MCF 10A (cell line): ENCODE measurements at regions of chrX and their contacts with region 1.

Region 1: DNA sequence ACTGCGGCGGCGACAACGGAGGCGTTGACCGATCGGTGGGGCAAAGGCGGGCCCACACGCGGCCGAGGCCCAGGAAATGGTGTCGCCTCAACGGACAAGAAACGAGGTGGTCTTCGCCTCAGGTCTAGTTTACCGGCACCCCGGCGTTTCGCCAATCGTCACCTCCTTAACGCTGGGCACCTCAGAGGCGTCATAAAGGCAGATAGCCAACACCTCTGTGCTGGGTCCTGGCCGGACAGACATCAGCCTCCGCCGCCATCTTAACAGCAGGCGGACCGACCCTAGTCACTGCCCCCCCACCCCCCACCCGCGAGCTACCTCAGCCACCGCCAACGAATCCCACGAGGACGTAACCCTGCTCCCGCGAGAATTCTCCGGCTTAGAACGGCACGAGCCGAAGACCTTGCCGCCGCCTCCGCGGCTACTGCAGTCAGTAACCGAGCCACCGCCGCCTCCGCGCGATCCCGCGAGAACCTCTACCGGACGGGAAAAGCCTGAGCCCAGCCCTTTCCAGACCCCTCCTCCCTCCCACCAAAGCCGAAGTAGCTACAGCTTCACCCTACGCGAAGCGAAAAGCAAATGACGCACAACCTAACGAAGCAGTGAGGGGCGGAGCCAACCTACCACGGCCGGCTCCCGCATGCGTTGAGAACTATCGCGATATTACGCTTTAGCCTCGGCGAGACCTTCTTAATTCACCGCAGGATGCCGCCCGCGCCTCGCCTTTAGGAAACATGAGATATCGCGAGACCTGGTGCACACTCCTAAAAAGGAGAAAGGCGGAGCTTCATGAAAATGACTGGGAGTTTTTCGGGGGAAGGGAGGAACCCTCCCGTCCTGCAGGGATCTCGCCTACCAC is 2.7 kb downstream of the HUWE1 start:
- DNase-seq: peak; percentile 97
- H3K4me3 Mint-ChIP-seq: peak overlapping the region; percentile 71
- H3K27ac Mint-ChIP-seq: peak overlapping the region; percentile 73
- H3K4me1 Mint-ChIP-seq: peaks cover 6% of the 10 kb centered on the region
- H3K27me3 Mint-ChIP-seq: peaks cover 37% of the 10 kb centered on the region
- CTCF ChIP-seq: no peak

Region 2: GRCh38 chrX:53704294-53704693 is 20.5 kb after region 1 on chrX:
- CTCF ChIA-PET with region 1: no interaction called
- POLR2A ChIA-PET with region 1: interaction called, 11 read pairs
- intact Hi-C with region 1: no loop called
- DNase-seq: no peak
- H3K4me3 Mint-ChIP-seq: no peak overlapping the region
- H3K27ac Mint-ChIP-seq: no peak overlapping the region
- H3K4me1 Mint-ChIP-seq: no peaks in the 10 kb centered on the region
- H3K27me3 Mint-ChIP-seq: peaks cover 40% of the 10 kb centered on the region
- CTCF ChIP-seq: no peak

Region 3: GRCh38 chrX:53714580-53715345 is 31.0 kb after region 1 on chrX:
- CTCF ChIA-PET with region 1: interaction called, 3 read pairs
- POLR2A ChIA-PET with region 1: interaction called, 15 read pairs
- intact Hi-C with region 1: no loop called
- DNase-seq: peak; percentile 21
- H3K4me3 Mint-ChIP-seq: no peak overlapping the region
- H3K27ac Mint-ChIP-seq: no peak overlapping the region
- H3K4me1 Mint-ChIP-seq: peaks cover 13% of the 10 kb centered on the region
- H3K27me3 Mint-ChIP-seq: peaks cover 29% of the 10 kb centered on the region
- CTCF ChIP-seq: no peak

Region 4: DNA sequence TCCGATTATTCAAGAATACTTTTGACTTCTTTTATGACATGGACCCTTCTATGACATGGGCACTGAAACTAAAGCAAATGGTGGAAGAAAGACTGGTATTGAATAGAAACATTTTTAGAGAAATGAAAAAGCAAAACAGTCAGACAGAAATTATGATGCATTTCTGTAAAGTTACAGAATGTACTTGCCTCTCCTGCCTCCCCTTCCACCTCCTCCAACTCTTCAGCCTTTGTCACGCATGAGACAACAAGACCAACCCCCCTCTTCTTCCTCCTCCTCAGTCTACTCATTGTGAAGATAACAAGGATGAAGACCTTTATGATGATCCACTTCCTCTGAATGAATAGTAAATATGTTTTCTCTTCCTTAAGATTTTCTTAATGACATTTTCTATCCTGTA is 49.0 kb after region 1 on chrX:
- CTCF ChIA-PET with region 1: interaction called, 4 read pairs
- POLR2A ChIA-PET with region 1: interaction called, 16 read pairs
- intact Hi-C with region 1: loop called (anchors 2 kb)
- DNase-seq: no peak
- H3K4me3 Mint-ChIP-seq: no peak overlapping the region
- H3K27ac Mint-ChIP-seq: no peak overlapping the region
- H3K4me1 Mint-ChIP-seq: no peaks in the 10 kb centered on the region
- H3K27me3 Mint-ChIP-seq: peaks cover 56% of the 10 kb centered on the region
- CTCF ChIP-seq: no peak

Region 5: DNA sequence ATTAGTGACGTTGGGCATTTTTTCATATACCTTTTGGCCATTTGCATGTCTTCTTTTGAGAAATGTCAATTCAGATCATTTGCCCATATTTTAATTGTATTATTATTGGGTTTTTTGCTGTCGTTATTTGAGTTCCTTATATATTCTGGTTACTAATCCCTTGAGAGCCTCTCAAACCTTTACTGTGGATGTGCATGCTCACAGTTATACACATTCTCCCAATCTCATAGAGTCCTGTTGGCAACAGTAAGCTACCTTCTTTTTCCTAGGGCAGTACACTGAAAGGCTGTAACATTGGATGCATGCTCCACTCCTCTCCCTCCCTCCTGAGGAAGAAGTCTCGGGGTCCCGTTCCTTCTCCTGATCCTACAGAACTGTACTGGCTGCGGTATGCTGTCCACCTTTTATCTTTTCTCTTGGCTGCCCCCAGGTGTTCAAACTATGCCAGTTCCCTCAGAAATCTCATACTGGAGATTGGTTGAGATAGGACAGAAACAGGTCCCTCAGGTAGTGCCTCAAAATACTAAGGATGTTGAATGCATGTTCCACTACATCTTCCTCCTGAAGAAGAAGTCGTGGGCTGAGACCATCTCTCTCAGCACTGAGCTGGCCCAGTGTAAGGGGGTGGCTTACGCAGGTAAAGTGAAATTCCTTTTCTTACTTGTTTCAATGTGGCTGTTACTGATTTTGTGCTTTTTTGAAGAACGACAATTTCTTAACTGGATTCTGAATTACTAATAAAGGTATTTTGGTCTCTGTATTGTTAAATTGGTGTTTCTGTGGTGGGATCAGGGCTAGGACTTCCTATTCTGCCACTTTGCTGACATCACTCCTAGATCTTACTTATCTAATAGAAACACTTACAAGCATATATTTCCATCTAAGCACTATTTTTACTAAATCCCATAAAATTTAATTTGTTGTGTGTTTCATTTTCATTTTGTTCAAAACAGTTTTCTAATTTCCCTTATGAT is 148.2 kb after region 1 on chrX:
- CTCF ChIA-PET with region 1: interaction called, 4 read pairs
- POLR2A ChIA-PET with region 1: interaction called, 6 read pairs
- intact Hi-C with region 1: loop called (anchors 1 kb)
- DNase-seq: peak; percentile 66
- H3K4me3 Mint-ChIP-seq: no peak overlapping the region
- H3K27ac Mint-ChIP-seq: no peak overlapping the region
- H3K4me1 Mint-ChIP-seq: no peaks in the 10 kb centered on the region
- H3K27me3 Mint-ChIP-seq: peaks cover 33% of the 10 kb centered on the region
- CTCF ChIP-seq: peak; percentile 64